Common myeloid progenitor, CD34-positive (primary cell): ENCODE measurements at regions of chr11 and their contacts with region 1.

Region 1: DNA sequence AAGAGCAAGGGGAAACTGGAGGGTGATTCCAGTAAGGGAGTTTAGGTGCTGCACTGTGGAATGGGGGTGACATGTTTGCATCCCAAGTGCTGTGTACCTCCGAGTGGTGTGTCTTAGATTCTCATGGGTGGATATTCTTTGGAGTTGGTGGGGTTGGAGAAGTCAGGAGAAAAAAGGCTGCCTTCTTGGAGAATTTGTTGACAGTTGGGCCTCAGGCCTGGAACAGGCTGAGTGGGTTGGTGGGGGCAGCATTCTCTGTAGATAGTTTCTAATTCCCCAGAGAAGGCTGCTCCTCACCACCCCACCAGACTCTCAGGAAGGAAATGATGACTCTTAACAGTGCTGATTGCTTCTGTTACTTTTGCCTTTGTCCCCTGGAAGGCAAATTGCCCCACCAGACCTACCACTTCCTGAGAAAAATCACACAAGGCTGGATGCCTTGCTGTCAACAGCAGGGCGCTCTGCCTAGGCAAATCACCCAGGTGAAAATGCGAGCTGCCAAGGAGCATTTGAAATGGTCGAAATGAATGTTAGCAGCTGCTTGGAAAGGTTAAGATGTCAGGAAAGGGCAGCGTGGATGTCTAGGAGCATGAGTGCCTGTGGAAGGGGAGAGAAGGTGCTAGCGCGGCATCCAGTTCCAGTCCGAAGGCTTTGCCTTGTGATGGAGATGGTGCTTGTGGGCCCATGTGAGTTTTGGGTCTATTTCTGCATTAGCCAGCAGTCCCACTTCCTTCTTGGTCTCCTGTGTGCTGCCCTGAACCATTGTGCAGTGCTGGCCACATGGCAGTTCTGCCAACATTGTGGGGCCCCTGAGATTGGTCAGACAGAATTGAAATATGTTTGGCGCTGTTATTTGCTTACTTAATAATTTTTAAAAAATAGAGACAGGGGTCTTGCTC is 29.7 kb upstream of the SORL1-AS1 start:
- DNase-seq: peak; percentile 72 to 94 (median 91)
- H3K4me3 ChIP-seq: peak overlapping the region in 4 of 7 experiments; percentile 2 to 56 (median 44)
- H3K27ac ChIP-seq: peak overlapping the region; percentile 52 to 74
- H3K4me1 ChIP-seq: peaks cover 25 to 61% (median 61%) of the 10 kb centered on the region in 4 experiments
- H3K27me3 ChIP-seq: no peaks in the 10 kb centered on the region

Region 2: DNA sequence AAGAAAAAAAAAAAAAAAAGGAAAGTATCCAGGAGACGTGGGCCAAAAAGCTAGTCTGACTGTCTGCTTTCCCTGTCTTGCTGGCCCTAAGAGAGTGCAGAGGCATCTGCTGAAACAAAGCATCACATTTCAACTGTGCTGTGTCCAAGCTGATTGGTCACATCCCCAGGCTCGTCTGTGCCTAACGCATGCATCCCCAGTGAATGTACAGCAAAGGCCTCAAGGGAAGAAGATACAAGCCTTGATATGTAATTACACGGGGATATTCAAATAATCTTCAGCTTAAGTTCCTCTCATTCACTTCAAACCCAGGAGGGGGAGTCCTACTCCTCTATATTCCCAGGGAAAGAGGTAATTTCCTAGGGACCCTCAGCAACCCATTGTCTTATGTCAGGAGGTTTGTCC is 35.7 kb before region 1 on chr11:
- CTCF ChIA-PET with region 1: interaction called, 11 read pairs
- POLR2A ChIA-PET with region 1: no interaction called
- DNase-seq: peak in 2 of 3 donors; percentile 32 to 39
- H3K4me3 ChIP-seq: no peak overlapping the region
- H3K27ac ChIP-seq: no peak overlapping the region
- H3K4me1 ChIP-seq: peaks cover 25 to 44% (median 32%) of the 10 kb centered on the region in 4 experiments
- H3K27me3 ChIP-seq: no peaks in the 10 kb centered on the region

Region 3: DNA sequence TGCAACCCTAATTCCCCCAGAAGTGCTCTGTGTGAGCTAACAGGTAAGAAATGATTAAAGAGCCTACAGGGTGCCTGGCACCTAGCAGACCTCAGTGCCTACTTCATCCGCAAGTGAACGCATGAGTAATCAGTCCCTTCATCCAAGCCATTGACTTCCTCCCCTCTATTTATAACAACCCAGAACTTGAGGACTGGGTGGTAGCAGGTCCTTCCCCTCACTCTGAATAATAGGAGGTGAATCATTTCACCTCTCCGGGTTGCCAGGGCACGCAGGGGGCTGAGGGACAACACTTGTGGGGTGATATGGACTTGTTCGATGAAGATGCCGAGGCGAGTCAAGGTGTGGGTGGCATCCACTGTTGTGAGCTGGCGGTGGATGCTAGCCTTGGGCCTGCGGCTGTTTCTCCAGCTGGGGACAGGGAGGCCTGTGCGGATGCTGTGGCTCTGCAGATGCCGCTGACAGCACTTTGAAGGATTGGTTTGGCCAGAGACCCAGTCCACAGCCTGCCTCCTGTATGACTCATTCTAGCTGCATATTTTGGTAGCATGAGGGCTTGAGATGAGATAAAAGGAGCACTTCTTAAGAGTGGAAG is 18.0 kb before region 1 on chr11:
- CTCF ChIA-PET with region 1: interaction called, 16 read pairs
- POLR2A ChIA-PET with region 1: interaction called, 4 read pairs
- DNase-seq: peak; percentile 84 to 98 (median 97)
- H3K4me3 ChIP-seq: peak overlapping the region in 2 of 7 experiments; percentile 5 to 50
- H3K27ac ChIP-seq: peak overlapping the region in 1 of 2 experiments; percentile 52
- H3K4me1 ChIP-seq: peaks cover 18 to 73% (median 62%) of the 10 kb centered on the region in 4 experiments
- H3K27me3 ChIP-seq: no peaks in the 10 kb centered on the region

Region 4: GRCh38 chr11:121494355-121495099 is 12.0 kb after region 1 on chr11:
- CTCF ChIA-PET with region 1: interaction called, 12 read pairs
- POLR2A ChIA-PET with region 1: no interaction called
- DNase-seq: peak in 2 of 3 donors; percentile 32 to 53
- H3K4me3 ChIP-seq: peak overlapping the region in 1 of 7 experiments; percentile 19
- H3K27ac ChIP-seq: no peak overlapping the region
- H3K4me1 ChIP-seq: peaks cover 2 to 13% (median 9%) of the 10 kb centered on the region in 4 experiments
- H3K27me3 ChIP-seq: no peaks in the 10 kb centered on the region

Region 5: DNA sequence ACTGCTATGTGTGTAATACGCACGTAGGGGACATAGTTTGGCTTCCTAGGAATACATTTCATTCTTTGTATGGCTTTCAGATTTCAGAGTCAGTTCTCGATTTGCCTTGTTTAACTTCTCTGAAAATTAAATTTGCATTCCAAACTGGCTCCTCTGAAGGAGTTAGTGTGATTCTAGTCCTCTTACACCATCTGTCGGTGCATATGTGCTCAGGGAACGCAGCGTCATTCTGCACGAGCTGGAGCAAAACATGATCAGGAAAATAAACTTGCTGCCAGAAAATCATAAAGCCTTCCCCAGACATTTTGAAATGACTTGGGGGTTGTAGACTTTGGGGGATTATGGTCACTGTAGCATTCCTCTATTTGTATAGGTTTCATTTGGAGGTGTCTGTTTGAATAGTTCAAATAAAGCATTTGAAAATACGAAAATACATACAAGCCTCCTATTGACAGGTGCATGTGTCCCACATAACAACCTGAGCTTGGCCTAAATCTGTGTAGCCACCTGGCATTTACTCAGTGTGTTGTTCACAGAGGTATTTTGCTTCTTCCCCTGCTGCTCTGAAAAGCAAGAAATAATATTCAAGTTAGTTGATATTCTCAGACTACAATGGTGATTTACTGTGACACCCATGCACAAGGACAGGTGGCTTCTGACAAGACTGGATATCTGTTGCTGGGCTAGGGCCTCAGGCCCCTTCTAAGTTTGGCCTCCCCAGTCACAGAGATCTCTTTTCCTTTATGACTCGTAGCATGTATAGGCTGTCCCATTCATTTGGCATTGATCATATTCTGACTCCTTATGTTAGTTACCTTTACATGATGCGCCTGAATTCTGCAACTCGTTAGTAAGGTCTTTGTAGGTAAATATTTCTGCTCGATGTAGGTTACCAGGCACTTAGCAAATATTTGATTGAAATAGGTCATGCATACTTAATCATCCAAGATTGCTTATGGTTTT is 51.9 kb after region 1 on chr11:
- CTCF ChIA-PET with region 1: no interaction called
- POLR2A ChIA-PET with region 1: no interaction called
- DNase-seq: peak; percentile 50 to 74 (median 73)
- H3K4me3 ChIP-seq: no peak overlapping the region
- H3K27ac ChIP-seq: no peak overlapping the region
- H3K4me1 ChIP-seq: peaks cover 6 to 10% (median 9%) of the 10 kb centered on the region in 4 experiments
- H3K27me3 ChIP-seq: no peaks in the 10 kb centered on the region